Activated CD4-positive, alpha-beta memory T cell treated with anti-CD3 and anti-CD28 coated beads, Interleukin-2, amount 10 ng/mL, durations not matched to agents 7 days and 5 days (primary cell): ENCODE measurements at regions of chr1 and their contacts with region 1.

Region 1: DNA sequence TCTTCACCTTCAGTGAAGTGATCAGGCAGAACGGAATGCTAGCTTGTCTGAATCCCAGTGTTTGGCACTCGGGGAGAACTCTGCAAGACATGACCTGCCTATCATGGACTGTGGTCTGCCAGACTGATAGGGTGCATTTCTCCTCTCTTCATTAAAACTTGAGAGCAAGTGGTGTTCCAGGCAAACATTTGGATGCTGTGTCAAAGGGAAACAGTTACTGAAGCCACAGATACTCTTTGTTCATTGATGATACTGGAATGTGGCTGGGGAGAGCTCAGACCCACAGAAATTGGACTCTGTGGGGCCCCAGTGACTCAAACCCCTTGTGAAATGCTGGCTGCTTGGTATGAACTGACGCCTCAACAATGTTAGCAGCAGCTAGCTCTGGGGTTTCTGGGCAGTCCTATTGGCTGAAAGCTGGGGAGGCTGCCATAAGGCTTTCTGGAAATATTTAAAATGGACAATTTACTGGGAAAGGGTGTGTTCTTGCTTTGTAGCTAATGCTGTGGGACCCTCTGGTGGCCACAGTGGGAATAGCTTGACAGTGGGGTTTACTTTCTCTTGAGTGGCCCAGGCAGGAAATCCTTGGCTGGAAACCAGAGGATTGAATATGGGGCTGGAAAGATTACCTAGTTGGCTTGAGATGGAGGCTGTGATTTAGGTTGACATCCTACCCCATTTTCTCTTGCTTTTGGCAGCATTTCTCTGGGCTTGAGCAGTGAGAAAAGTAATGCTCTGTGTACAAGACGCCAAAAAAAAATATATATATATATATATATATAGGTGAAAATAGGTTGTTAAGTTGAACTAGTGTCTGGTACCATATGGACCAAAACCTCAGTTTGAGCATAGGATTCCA is 8.0 kb upstream of the S100A10 start:
- DNase-seq: peak; percentile 84
- H3K4me3 Mint-ChIP-seq: no peak overlapping the region
- H3K27ac Mint-ChIP-seq: no peak overlapping the region
- H3K4me1 Mint-ChIP-seq: peaks cover 22% of the 10 kb centered on the region
- H3K27me3 Mint-ChIP-seq: peaks cover 21% of the 10 kb centered on the region

Region 2: GRCh38 chr1:151888972-151889570 is 112.5 kb before region 1 on chr1:
- CTCF ChIA-PET with region 1: interaction called, 58 read pairs
- POLR2A ChIA-PET with region 1: no interaction called
- DNase-seq: no peak
- H3K4me3 Mint-ChIP-seq: no peak overlapping the region
- H3K27ac Mint-ChIP-seq: no peak overlapping the region
- H3K4me1 Mint-ChIP-seq: peaks cover 27% of the 10 kb centered on the region
- H3K27me3 Mint-ChIP-seq: no peaks in the 10 kb centered on the region

Region 3: GRCh38 chr1:151924679-151925587 is 76.7 kb before region 1 on chr1:
- CTCF ChIA-PET with region 1: interaction called, 181 read pairs
- POLR2A ChIA-PET with region 1: interaction called, 4 read pairs
- DNase-seq: no peak
- H3K4me3 Mint-ChIP-seq: no peak overlapping the region
- H3K27ac Mint-ChIP-seq: peak overlapping the region; percentile 34
- H3K4me1 Mint-ChIP-seq: peaks cover 19% of the 10 kb centered on the region
- H3K27me3 Mint-ChIP-seq: no peaks in the 10 kb centered on the region

Region 4: GRCh38 chr1:151934048-151934493 is 67.5 kb before region 1 on chr1:
- CTCF ChIA-PET with region 1: interaction called, 181 read pairs
- POLR2A ChIA-PET with region 1: interaction called, 4 read pairs
- DNase-seq: peak; percentile 48
- H3K4me3 Mint-ChIP-seq: no peak overlapping the region
- H3K27ac Mint-ChIP-seq: no peak overlapping the region
- H3K4me1 Mint-ChIP-seq: peaks cover 2% of the 10 kb centered on the region
- H3K27me3 Mint-ChIP-seq: peaks cover 8% of the 10 kb centered on the region

Region 5: GRCh38 chr1:151976858-151977257 is 24.8 kb before region 1 on chr1:
- CTCF ChIA-PET with region 1: interaction called, 89 read pairs
- POLR2A ChIA-PET with region 1: interaction called, 3 read pairs
- DNase-seq: no peak
- H3K4me3 Mint-ChIP-seq: no peak overlapping the region
- H3K27ac Mint-ChIP-seq: no peak overlapping the region
- H3K4me1 Mint-ChIP-seq: peaks cover 24% of the 10 kb centered on the region
- H3K27me3 Mint-ChIP-seq: peaks cover 9% of the 10 kb centered on the region

Region 6: DNA sequence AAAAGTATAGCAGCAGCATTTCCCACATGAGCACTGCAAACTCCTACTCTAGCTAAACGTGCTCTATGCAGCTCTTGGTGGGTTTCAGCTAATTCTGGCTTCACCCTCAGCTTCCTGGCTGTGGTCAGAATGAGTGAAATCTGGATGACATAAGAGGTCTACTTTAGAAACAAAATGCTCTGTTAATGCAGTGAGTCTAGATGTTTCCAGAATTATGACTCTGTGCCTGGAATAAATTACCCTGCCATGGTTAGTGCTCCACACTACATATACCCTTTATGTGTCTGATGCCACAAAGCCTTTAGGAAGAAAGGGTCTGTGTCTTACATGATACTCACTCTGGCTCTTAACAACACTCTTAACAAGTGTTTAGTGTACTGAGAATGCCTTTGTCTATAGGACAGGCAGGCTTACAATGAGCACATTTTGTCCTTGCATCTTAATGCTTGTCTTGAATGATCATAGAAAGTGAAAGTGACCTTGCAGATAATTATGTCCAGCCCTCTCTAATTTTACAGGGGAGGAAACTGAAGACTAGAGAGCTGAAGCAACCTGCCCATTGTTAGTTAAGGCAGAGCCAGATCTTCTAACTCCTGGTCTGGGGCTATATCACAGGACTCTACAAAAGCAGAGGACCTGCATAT is 17.2 kb before region 1 on chr1:
- CTCF ChIA-PET with region 1: interaction called, 24 read pairs
- POLR2A ChIA-PET with region 1: interaction called, 5 read pairs
- DNase-seq: peak; percentile 60
- H3K4me3 Mint-ChIP-seq: peak overlapping the region; percentile 7
- H3K27ac Mint-ChIP-seq: peak overlapping the region; percentile 76
- H3K4me1 Mint-ChIP-seq: peaks cover 63% of the 10 kb centered on the region
- H3K27me3 Mint-ChIP-seq: no peaks in the 10 kb centered on the region

Region 7: DNA sequence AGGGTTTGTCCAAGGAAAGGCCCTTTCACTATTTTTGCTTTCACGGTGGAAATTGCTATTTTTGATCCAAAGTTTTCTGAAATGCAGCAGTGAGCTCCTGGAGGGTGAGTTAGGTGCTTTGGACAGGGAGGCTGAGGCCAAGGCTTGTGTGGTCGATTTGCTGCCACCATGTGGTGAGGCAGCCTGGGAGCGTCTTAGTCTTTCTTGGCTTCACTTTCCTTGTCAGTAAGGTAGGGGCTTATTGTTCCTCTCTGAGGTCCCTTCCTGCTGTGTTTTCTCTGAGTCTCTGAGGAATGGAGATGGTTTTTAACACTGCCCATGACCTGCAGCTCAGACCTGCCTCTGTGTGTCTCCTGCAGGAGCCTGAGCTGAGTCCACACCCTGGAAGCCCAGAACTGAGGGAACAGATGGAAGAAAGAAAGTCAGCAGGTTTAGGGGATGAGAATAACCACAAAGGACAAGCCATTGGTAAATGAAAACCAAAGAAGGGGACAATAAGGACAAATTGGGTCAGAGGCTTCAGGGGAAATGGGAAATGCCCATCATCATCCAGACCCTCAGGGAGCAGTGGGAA is 12.1 kb after region 1 on chr1:
- CTCF ChIA-PET with region 1: interaction called, 54 read pairs
- POLR2A ChIA-PET with region 1: no interaction called
- DNase-seq: peak; percentile 66
- H3K4me3 Mint-ChIP-seq: no peak overlapping the region
- H3K27ac Mint-ChIP-seq: no peak overlapping the region
- H3K4me1 Mint-ChIP-seq: peaks cover 6% of the 10 kb centered on the region
- H3K27me3 Mint-ChIP-seq: peaks cover 30% of the 10 kb centered on the region

Region 8: GRCh38 chr1:152227310-152227928 is 225.8 kb after region 1 on chr1:
- CTCF ChIA-PET with region 1: no interaction called
- POLR2A ChIA-PET with region 1: no interaction called
- DNase-seq: no peak
- H3K4me3 Mint-ChIP-seq: no peak overlapping the region
- H3K27ac Mint-ChIP-seq: no peak overlapping the region
- H3K4me1 Mint-ChIP-seq: no peaks in the 10 kb centered on the region
- H3K27me3 Mint-ChIP-seq: peaks cover 16% of the 10 kb centered on the region